Activated naive CD4-positive, alpha-beta T cell treated with anti-CD3 and anti-CD28 coated beads for 36 hours (primary cell): ENCODE measurements at regions of chr15 and their contacts with region 1.

Region 1: DNA sequence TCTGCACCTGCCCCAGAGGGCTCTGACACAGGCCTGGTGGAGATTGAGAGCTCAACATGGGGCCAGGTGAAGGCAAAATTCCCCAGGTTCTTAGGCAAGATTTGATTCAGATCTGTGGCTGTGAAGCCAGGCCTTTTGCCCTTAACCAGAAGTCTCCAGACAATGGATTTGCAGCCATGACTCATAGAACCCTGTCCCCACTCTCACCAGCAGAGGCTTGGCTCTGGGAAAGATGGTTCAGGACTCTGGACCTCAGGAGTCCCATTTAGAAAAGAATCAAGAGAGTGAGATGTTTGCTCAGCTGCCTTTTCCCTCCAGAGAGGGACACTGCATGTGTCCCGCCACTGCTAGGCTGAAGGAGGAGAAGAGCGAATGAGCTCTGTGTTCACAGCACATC is 361.4 kb upstream of the ICE2 start:
- DNase-seq: peak; percentile 53
- H3K4me3 Mint-ChIP-seq: peak overlapping the region; percentile 76
- H3K27ac Mint-ChIP-seq: peak overlapping the region; percentile 84
- H3K4me1 Mint-ChIP-seq: peaks cover 73% of the 10 kb centered on the region
- H3K27me3 Mint-ChIP-seq: no peaks in the 10 kb centered on the region

Region 2: GRCh38 chr15:60673918-60674558 is 166.3 kb before region 1 on chr15:
- CTCF ChIA-PET with region 1: interaction called, 3 read pairs
- intact Hi-C with region 1: loop called (anchors 5 kb)
- DNase-seq: peak; percentile 80
- H3K4me3 Mint-ChIP-seq: no peak overlapping the region
- H3K27ac Mint-ChIP-seq: no peak overlapping the region
- H3K4me1 Mint-ChIP-seq: peaks cover 29% of the 10 kb centered on the region
- H3K27me3 Mint-ChIP-seq: no peaks in the 10 kb centered on the region

Region 3: GRCh38 chr15:60772395-60773120 is 67.7 kb before region 1 on chr15:
- CTCF ChIA-PET with region 1: no interaction called
- intact Hi-C with region 1: loop called (anchors 2 kb)
- DNase-seq: peak; percentile 32
- H3K4me3 Mint-ChIP-seq: no peak overlapping the region
- H3K27ac Mint-ChIP-seq: peak overlapping the region; percentile 95
- H3K4me1 Mint-ChIP-seq: peaks cover 67% of the 10 kb centered on the region
- H3K27me3 Mint-ChIP-seq: no peaks in the 10 kb centered on the region

Region 4: GRCh38 chr15:60798821-60799220 is 41.5 kb before region 1 on chr15:
- CTCF ChIA-PET with region 1: interaction called, 9 read pairs
- intact Hi-C with region 1: loop called (anchors 1 kb)
- DNase-seq: peak; percentile 87
- H3K4me3 Mint-ChIP-seq: peak overlapping the region; percentile 34
- H3K27ac Mint-ChIP-seq: peak overlapping the region; percentile 98
- H3K4me1 Mint-ChIP-seq: peaks cover 83% of the 10 kb centered on the region
- H3K27me3 Mint-ChIP-seq: no peaks in the 10 kb centered on the region

Region 5: GRCh38 chr15:60819860-60820259 is 20.4 kb before region 1 on chr15:
- CTCF ChIA-PET with region 1: no interaction called
- intact Hi-C with region 1: loop called (anchors 2 kb)
- DNase-seq: peak; percentile 25
- H3K4me3 Mint-ChIP-seq: no peak overlapping the region
- H3K27ac Mint-ChIP-seq: no peak overlapping the region
- H3K4me1 Mint-ChIP-seq: peaks cover 33% of the 10 kb centered on the region
- H3K27me3 Mint-ChIP-seq: no peaks in the 10 kb centered on the region

Region 6: DNA sequence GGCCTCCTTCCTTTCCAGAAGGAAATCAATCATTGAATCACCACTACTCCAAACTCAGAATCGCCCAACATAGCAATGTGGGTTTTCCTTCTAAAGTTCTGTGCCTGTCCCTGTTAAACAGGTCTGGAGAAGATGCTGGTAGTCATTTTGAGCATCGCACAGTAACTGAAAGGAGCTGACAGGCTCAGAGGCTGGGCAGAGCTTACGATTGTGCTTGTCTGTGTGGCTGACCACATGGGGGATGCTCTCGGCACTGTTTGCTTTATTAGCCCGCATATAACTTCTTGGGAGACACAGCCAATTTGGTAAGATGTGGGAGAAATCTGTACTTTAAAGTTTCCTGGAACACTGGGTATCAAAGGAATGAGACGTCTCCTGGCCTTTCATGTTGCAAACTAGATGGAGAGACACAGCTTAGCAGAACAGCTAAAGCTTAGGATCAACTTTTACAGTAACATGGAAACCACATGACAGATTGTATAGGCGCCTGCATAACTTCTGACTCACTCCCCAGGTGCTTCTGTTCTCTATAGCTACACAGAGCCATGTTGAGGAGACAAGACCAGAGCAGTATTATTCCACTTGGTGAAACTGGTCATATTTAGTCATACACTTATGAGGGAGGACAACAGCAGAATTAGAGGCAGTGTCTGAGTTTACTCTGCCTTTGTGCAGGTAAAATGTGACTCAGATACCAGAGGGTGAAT is 14.7 kb after region 1 on chr15:
- CTCF ChIA-PET with region 1: interaction called, 3 read pairs
- intact Hi-C with region 1: loop called (anchors 1 kb)
- DNase-seq: peak; percentile 60
- H3K4me3 Mint-ChIP-seq: no peak overlapping the region
- H3K27ac Mint-ChIP-seq: peak overlapping the region; percentile 13
- H3K4me1 Mint-ChIP-seq: peaks cover 64% of the 10 kb centered on the region
- H3K27me3 Mint-ChIP-seq: no peaks in the 10 kb centered on the region

Region 7: DNA sequence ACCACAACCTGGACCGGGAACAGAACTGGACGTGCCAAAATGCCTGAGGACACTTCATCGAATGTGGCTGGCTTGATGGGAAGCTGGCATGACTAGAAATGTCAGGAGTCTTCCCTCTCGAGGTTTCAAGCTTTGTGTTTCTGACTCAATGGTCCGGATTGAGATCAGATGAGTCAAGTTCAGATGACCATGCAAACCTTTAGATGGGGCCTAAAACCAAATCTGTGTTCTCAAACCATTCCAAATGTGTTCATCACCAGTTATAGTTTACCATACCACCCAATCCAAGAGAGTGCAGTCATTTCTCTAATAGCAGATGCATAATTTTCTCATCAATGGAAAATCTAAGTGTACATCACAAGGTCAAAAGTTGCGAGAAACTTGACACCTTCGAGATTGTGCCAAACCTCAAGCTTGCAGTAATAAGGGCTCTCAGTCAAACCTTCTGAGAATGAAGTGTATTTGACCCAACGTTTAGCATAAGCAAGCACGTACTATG is 19.7 kb after region 1 on chr15:
- CTCF ChIA-PET with region 1: interaction called, 3 read pairs
- intact Hi-C with region 1: loop called (anchors 1 kb)
- DNase-seq: no peak
- H3K4me3 Mint-ChIP-seq: no peak overlapping the region
- H3K27ac Mint-ChIP-seq: peak overlapping the region; percentile 69
- H3K4me1 Mint-ChIP-seq: peaks cover 68% of the 10 kb centered on the region
- H3K27me3 Mint-ChIP-seq: no peaks in the 10 kb centered on the region

Region 8: DNA sequence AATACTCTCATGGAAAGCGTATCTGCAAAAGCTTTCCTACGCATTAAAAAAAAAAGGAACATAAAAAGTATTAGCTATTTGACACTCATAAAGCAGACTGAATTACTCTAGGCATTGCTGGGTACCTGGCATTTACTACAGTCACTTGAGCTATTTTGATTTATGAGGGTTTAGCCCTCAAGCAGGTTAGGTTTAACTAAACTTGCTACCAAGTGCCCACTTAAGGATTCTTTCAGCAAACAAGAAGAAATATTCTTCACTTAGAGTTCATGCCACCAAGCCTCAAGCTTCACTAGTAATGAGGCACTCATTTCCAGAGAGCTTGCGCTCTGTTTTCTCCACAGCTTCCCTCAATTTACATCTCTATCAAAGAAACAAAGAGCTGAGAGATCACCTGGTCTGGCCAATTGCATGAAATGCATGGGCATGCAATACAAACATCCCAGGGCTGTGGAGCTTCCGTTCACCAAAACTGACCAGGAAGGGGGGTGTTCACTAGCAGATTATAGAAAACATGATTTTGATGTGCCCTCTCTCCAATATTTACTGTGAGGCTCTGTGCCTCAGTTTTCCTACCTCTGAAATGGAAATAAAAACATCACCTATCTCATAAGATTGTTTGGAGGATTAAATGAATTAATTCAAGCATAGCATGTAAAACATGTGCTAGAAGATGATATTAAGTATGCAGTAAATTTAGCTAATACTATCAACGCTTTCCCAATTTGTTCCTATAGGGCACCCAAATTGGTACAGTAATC is 171.5 kb after region 1 on chr15:
- CTCF ChIA-PET with region 1: no interaction called
- intact Hi-C with region 1: no loop called
- DNase-seq: no peak
- H3K4me3 Mint-ChIP-seq: no peak overlapping the region
- H3K27ac Mint-ChIP-seq: no peak overlapping the region
- H3K4me1 Mint-ChIP-seq: no peaks in the 10 kb centered on the region
- H3K27me3 Mint-ChIP-seq: peaks cover 25% of the 10 kb centered on the region